Vagina (tissue), 2 donors: ENCODE measurements at regions of chr1 and their contacts with region 1.

Region 1: DNA sequence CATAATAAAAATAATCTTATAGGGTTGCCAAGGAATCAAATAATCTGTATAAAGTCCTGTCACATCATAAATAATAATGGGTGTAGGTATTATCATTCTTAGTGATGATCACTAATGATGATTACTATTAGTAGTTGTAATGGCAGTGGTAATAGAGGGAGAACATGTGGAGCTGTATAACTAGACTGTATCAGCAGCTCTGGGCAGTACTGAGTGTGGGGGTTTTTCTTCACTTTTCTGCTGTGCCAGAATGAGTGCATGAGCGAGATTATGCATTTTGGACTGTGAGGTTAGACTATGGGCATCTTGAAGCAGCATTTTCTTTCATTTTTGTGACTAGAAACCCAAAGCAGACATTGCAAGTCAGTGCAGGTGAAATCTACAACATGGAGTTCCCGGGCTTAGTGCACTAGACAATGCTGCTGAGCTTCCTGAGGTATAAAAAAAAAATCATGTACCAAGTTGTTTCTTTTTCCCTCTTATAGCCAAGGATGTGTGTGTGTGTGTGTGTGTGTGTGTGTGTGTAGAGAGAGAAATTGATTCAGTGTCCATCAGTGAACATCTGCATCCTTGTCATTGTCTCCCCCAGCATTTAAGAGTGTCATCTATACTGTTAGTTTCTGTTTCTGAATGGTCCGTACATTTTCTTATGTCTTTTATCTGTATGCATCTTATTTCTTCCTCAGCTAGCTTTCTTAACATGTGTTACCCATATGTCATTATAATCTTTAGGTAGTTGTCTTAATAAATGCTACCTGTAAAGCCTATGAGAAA is 86.6 kb downstream of the GIPC2 start:
- DNase-seq: no peak
- H3K4me3 ChIP-seq: no peak overlapping the region
- H3K27ac ChIP-seq: no peak overlapping the region
- H3K4me1 ChIP-seq: no peaks in the 10 kb centered on the region
- H3K27me3 ChIP-seq: no peaks in the 10 kb centered on the region
- CTCF ChIP-seq: no peak
- POLR2A ChIP-seq: no peak

Region 2: DNA sequence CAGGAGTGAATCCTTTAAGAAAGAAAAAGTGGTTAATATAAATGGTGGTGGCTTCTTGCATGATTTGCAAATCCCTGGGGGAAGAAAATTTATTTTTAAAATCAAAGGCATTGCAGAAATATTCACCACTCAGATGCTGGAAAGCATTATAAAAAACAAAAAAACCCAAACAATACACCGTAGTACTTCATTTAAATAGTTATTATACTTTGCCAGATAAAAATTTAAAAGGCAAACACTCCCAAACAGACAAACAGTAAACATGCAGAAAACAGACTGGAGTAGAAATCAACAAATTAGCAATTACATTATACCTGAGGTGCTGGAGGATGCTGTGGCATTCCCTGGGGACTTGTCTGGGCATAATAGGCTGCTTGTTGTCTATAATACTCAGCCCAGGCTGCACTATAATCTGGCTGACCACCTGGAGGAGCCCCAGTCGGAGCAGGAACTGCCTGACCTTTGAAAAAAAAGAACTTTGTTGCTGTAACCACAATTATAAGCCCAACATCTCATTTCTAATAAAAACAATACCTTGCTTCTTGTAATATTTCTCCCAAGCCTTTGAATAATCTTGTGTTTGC is 183.4 kb before region 1 on chr1:
- intact Hi-C with region 1: no loop called
- DNase-seq: no peak
- H3K4me3 ChIP-seq: no peak overlapping the region
- H3K27ac ChIP-seq: no peak overlapping the region
- H3K4me1 ChIP-seq: peaks cover 11% of the 10 kb centered on the region
- H3K27me3 ChIP-seq: no peaks in the 10 kb centered on the region
- CTCF ChIP-seq: no peak
- POLR2A ChIP-seq: no peak

Region 3: GRCh38 chr1:78607334-78607927 is 475.1 kb after region 1 on chr1:
- intact Hi-C with region 1: loop called (anchors 10 kb)
- DNase-seq: no peak
- H3K4me3 ChIP-seq: no peak overlapping the region
- H3K27ac ChIP-seq: no peak overlapping the region
- H3K4me1 ChIP-seq: no peaks in the 10 kb centered on the region
- H3K27me3 ChIP-seq: no peaks in the 10 kb centered on the region
- CTCF ChIP-seq: peak; percentile 4 to 70 (median 63)
- POLR2A ChIP-seq: no peak